ENCODE measurements at regions of chr19 and their contacts with region 1.

Region 1: GRCh38 chr19:5827891-5828660 is 11.4 kb downstream of the FUT6 start:
- DNase-seq: peak; percentile 100
- H3K4me3 ChIP-seq: peak overlapping the region; percentile 63 to 67
- H3K27ac ChIP-seq: peak overlapping the region; percentile 64 to 96
- H3K4me1 ChIP-seq: peaks cover 0 to 28% of the 10 kb centered on the region in 2 experiments; a peak in 1 of 4 replicates
- H3K27me3 ChIP-seq: no peaks in the 10 kb centered on the region
- CTCF ChIP-seq: no peak
- EP300 ChIP-seq: no peak
- RAD21 ChIP-seq: no peak

Region 2: GRCh38 chr19:5790573-5791520 is 37.2 kb before region 1 on chr19 and contains the start of gene DUS3L:
- CTCF ChIA-PET with region 1: interaction called, 10 read pairs
- POLR2A ChIA-PET with region 1: interaction called, 3 read pairs
- DNase-seq: peak; percentile 97
- H3K4me3 ChIP-seq: peak within 1 kb of the TSS; percentile 73 to 97
- H3K27ac ChIP-seq: peak within 1 kb of the TSS; percentile 90 to 95
- H3K4me1 ChIP-seq: peaks cover 0 to 8% of the 10 kb centered on the region in 2 experiments; a peak in 1 of 4 replicates
- H3K27me3 ChIP-seq: no peaks in the 10 kb centered on the region
- CTCF ChIP-seq: no peak
- EP300 ChIP-seq: no peak
- RAD21 ChIP-seq: no peak
- polyA plus RNA-seq, gene DUS3L: 44.0 and 45.2 TPM in 2 replicates

Region 3: GRCh38 chr19:5809053-5809452 is 19.0 kb before region 1 on chr19:
- CTCF ChIA-PET with region 1: interaction called, 51 read pairs
- POLR2A ChIA-PET with region 1: interaction called, 15 read pairs
- DNase-seq: no peak
- H3K4me3 ChIP-seq: no peak overlapping the region
- H3K27ac ChIP-seq: no peak overlapping the region
- H3K4me1 ChIP-seq: peaks cover 0 to 6% of the 10 kb centered on the region in 2 experiments; a peak in 1 of 4 replicates
- H3K27me3 ChIP-seq: peaks cover 6% of the 10 kb centered on the region; the same call in 1 of the 2 replicates
- CTCF ChIP-seq: no peak
- EP300 ChIP-seq: no peak
- RAD21 ChIP-seq: no peak

Region 4: DNA sequence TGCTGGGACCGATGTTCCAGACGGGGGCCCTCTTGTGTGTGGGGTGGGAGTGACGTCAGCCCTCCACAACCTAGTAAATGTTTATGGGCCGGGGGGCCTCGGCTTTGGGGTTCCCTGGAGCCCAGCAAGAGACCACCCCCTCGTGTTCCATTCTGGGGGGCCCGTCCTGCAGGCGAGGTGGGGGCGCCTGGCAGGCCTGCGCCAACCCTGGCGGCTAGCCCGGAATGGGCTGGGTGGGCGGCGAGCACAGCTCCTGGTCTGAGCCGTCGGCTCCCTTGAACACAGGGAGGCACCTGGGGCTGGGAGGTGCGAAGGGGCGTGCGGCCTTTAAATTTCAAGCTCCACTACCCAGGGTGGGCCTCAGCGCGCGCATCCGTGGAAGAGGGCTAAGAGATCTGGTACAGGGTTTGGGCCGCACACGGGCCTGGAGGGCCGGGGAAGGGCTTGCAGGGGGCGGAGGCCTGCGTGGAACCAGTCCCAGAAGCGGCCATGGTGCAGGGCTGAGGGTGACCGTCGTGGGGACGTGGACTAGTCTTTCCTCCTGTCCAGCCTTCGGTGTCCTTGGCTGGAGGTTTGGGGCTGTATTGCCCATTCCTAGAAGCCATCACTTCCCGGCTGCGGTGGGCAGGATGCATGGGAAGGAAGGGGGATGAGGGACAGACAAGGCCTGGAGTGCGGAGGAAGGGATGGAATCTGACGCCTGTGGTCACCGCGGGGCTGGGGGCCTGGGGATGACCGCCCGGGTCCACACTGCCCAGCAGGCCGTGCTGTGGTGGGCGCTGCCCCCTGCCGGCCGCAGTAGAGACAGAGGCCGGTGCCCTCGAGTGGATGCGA is 64.1 kb after region 1 on chr19:
- CTCF ChIA-PET with region 1: interaction called, 12 read pairs
- POLR2A ChIA-PET with region 1: interaction called, 4 read pairs
- DNase-seq: peak; percentile 83
- H3K4me3 ChIP-seq: no peak overlapping the region; a peak in 1 of 4 replicates
- H3K27ac ChIP-seq: no peak overlapping the region; a peak in 1 of 4 replicates
- H3K4me1 ChIP-seq: peaks cover 0 to 44% of the 10 kb centered on the region in 2 experiments; a peak in 1 of 4 replicates
- H3K27me3 ChIP-seq: no peaks in the 10 kb centered on the region
- CTCF ChIP-seq: peak; percentile 70
- EP300 ChIP-seq: no peak
- RAD21 ChIP-seq: peak; percentile 70

Region 5: DNA sequence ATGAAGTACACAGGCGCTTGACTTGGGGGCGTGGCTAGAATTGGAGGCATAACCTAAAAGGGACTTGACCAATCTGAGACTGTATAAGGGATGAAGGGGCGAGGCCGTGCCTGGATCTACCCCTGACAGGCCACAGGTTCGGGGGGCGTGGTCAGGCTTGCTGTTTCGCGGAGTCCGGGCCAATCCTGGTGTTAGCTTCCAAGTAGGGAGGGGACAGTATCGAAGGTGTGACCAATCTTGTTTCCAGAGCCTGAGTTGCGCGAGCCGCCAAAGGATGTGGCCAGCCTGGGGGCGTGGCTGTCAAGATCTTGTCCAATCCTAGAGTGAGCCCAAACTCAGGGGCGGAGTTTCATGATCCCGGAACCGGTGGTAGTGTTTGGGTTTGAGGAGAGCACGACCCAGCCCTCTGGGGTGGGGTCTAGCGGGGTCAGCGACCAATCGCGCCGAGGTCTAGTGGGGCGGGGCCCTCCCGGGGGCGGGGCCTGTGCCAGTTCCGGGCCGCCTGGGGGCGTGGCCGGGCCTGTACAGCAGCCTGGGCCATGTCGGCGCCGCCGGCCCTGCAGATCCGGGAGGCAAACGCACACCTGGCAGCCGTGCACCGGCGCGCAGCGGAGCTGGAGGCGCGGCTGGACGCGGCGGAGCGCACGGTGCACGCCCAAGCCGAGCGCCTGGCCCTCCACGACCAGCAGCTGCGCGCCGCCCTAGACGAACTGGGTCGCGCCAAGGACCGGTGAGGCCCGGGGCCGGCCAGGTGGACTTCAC is 76.5 kb after region 1 on chr19 and contains the start of gene VMAC:
- CTCF ChIA-PET with region 1: interaction called, 4 read pairs
- POLR2A ChIA-PET with region 1: interaction called, 11 read pairs
- DNase-seq: peak; percentile 99
- H3K4me3 ChIP-seq: peak within 1 kb of the TSS; percentile 71 to 79
- H3K27ac ChIP-seq: peak within 1 kb of the TSS; percentile 84 to 88
- H3K4me1 ChIP-seq: peaks cover 0 to 5% of the 10 kb centered on the region in 2 experiments; a peak in 2 of 4 replicates
- H3K27me3 ChIP-seq: no peaks in the 10 kb centered on the region
- CTCF ChIP-seq: no peak
- EP300 ChIP-seq: no peak
- RAD21 ChIP-seq: peak; percentile 10; the same call in 1 of the 2 replicates
- polyA plus RNA-seq, gene VMAC: 6.5 and 9.1 TPM in 2 replicates

Region 6: GRCh38 chr19:5914921-5915781 is 87.1 kb after region 1 on chr19:
- CTCF ChIA-PET with region 1: no interaction called
- POLR2A ChIA-PET with region 1: no interaction called
- DNase-seq: no peak
- H3K4me3 ChIP-seq: no peak overlapping the region
- H3K27ac ChIP-seq: no peak overlapping the region
- H3K4me1 ChIP-seq: peaks cover 4 to 5% of the 10 kb centered on the region in 2 experiments; a peak in 2 of 4 replicates
- H3K27me3 ChIP-seq: no peaks in the 10 kb centered on the region
- CTCF ChIP-seq: no peak
- EP300 ChIP-seq: no peak
- RAD21 ChIP-seq: no peak

Region 7: GRCh38 chr19:5934774-5935472 is 106.8 kb after region 1 on chr19:
- CTCF ChIA-PET with region 1: interaction called, 3 read pairs
- POLR2A ChIA-PET with region 1: interaction called, 10 read pairs
- DNase-seq: peak; percentile 91
- H3K4me3 ChIP-seq: no peak overlapping the region
- H3K27ac ChIP-seq: peak overlapping the region; percentile 45 to 94
- H3K4me1 ChIP-seq: peaks cover 13 to 67% of the 10 kb centered on the region in 2 experiments
- H3K27me3 ChIP-seq: no peaks in the 10 kb centered on the region
- CTCF ChIP-seq: no peak
- EP300 ChIP-seq: peak in 1 of 2 experiments; percentile 75; a peak in 1 of 4 replicates
- RAD21 ChIP-seq: no peak

Measured in SK-N-SH (cell line).